ENCODE measurements at regions of chr10 and their contacts with region 1.

Region 1: DNA sequence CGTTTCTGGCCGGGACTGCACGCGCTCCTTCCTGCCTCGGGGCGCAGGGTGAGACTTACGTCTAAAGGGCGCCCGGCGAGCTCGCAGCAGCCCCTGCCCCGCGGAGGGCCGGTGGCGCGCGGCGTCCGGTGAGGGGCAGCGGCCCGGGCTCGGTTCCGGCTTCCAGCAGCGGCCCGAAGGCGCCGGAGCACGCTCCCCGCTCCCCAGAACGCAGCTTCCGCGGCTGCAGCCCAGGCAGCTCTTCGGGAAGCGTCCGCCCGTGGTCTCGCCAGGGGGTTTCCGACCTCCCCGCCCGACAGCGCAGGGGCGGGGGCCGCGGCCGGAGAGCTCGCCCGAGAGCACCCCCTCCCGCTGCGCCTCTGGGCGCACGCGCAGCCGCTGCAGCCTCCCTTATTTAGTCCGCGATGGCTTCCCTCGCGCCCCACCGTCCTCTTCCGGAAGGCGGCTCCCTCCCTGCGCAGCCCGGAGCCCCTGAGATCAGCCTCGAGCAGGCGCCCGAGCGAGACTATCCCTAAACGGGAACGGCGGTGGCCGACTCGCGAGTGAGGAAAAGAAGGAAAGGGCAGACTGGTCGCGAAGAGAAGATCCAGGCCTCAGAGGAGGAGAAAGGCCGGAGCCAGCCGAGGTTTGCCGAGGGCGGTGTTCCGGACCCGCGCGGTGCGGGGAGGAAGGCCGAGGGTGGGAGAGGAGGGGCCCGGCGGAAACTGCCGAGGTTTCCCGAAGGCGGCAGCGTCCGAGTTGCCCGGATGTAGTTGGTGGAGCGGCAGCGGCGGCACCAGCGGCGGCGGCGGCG is at the start of gene WAC:
- DNase-seq: peak; percentile 97
- ATAC-seq: peak; percentile 79
- H3K4me3 Mint-ChIP-seq: peak within 1 kb of the TSS; percentile 99
- H3K27ac Mint-ChIP-seq: peak within 1 kb of the TSS; percentile 100
- H3K4me1 Mint-ChIP-seq: peaks cover 63% of the 10 kb centered on the region
- H3K27me3 Mint-ChIP-seq: no peaks in the 10 kb centered on the region
- CTCF ChIP-seq: no peak
- total RNA-seq, gene WAC: 145 and 159 TPM in 2 replicates

Region 2: DNA sequence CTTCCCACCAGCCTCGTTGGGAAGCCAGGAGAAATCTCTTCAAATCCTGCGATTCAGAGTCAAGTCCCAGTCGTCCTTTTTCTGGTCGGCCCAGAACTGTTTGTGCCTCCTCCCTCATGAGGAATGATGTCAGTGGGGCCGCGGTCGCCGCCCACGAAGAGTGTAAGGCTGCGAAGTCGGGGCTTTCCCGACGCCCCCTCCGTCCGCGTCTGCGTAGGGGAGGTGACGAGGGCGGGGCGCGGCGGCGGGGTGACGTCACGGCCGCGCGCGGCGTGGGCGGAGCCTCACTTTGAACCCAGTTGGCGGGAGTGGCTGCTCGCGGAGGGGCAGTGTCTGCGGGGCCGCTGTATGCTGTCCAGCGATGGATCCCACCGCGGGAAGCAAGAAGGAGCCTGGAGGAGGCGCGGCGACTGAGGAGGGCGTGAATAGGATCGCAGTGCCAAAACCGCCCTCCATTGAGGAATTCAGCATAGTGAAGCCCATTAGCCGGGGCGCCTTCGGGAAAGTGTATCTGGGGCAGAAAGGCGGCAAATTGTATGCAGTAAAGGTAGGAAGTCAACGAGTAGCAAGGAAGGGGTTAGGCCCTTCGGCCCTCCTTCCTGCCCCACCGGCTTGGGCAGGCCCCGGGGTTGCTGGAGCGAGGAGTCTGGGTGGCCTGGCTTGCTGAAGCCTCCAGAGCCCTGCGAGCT is 1377.4 kb before region 1 on chr10 and contains the start of gene MASTL:
- CTCF ChIA-PET with region 1: no interaction called
- POLR2A ChIA-PET with region 1: interaction called, 15 read pairs
- intact Hi-C with region 1: no loop called
- DNase-seq: peak; percentile 97
- ATAC-seq: peak; percentile 84
- H3K4me3 Mint-ChIP-seq: peak within 1 kb of the TSS; percentile 100
- H3K27ac Mint-ChIP-seq: peak within 1 kb of the TSS; percentile 100
- H3K4me1 Mint-ChIP-seq: peaks cover 44% of the 10 kb centered on the region
- H3K27me3 Mint-ChIP-seq: no peaks in the 10 kb centered on the region
- CTCF ChIP-seq: no peak
- total RNA-seq, gene MASTL: 11.2 and 12.4 TPM in 2 replicates

Region 3: DNA sequence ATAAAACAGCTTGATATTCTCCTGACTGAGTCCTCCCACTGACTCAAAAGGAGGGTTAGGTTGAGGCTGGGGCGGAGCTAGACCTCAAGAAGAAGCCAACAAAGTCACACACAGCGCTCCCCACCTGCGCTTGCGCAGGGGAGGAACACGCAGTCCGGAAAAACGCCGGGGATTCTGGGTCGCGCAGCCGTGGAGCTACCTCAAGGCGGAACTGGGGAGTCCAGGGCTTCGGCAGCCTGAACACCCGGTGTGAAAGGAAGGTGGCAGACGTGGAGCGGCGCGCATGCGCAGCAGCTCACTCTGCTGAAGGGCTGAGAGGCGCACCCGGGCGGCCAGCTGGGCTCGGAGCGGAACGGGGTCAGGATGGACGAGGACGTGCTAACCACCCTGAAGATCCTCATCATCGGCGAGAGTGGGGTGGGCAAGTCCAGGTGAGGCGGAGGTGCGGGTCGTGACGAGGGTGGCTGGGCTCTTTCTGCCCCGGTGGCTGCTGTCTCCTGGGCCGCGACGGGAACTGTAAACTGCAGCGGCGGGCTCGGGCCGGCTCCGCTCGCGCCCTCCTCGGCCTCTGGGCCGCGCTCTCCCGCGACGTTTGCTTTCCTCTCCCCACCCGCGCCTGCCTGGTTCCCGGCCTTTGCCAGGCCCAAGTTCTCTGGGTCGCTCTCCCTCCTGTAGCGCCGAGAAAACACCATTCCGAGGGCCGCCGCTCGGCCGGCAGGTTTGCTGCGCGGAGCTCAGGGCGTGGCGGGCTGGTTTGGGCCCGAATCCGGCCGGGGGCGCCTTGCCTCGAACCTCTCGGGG is 1028.4 kb before region 1 on chr10 and contains the start of gene RAB18:
- CTCF ChIA-PET with region 1: interaction called, 3 read pairs
- POLR2A ChIA-PET with region 1: interaction called, 10 read pairs
- intact Hi-C with region 1: loop called (anchors 1 kb)
- DNase-seq: peak; percentile 93
- ATAC-seq: peak; percentile 96
- H3K4me3 Mint-ChIP-seq: peak within 1 kb of the TSS; percentile 100
- H3K27ac Mint-ChIP-seq: peak within 1 kb of the TSS; percentile 99
- H3K4me1 Mint-ChIP-seq: peaks cover 41% of the 10 kb centered on the region
- H3K27me3 Mint-ChIP-seq: no peaks in the 10 kb centered on the region
- CTCF ChIP-seq: no peak
- total RNA-seq, gene RAB18: 48.3 and 55.6 TPM in 2 replicates

Region 4: GRCh38 chr10:28432210-28432676 is 100.3 kb before region 1 on chr10:
- CTCF ChIA-PET with region 1: no interaction called
- POLR2A ChIA-PET with region 1: interaction called, 4 read pairs
- intact Hi-C with region 1: loop called (anchors 1 kb)
- DNase-seq: no peak
- ATAC-seq: peak; percentile 58
- H3K4me3 Mint-ChIP-seq: peak overlapping the region; percentile 66
- H3K27ac Mint-ChIP-seq: no peak overlapping the region
- H3K4me1 Mint-ChIP-seq: peaks cover 6% of the 10 kb centered on the region
- H3K27me3 Mint-ChIP-seq: no peaks in the 10 kb centered on the region
- CTCF ChIP-seq: peak; percentile 75

Region 5: GRCh38 chr10:28554952-28555351 is 22.4 kb after region 1 on chr10:
- CTCF ChIA-PET with region 1: no interaction called
- POLR2A ChIA-PET with region 1: interaction called, 3 read pairs
- intact Hi-C with region 1: loop called (anchors 2 kb)
- DNase-seq: no peak
- ATAC-seq: no peak
- H3K4me3 Mint-ChIP-seq: no peak overlapping the region
- H3K27ac Mint-ChIP-seq: no peak overlapping the region
- H3K4me1 Mint-ChIP-seq: peaks cover 89% of the 10 kb centered on the region
- H3K27me3 Mint-ChIP-seq: no peaks in the 10 kb centered on the region
- CTCF ChIP-seq: no peak

Region 6: DNA sequence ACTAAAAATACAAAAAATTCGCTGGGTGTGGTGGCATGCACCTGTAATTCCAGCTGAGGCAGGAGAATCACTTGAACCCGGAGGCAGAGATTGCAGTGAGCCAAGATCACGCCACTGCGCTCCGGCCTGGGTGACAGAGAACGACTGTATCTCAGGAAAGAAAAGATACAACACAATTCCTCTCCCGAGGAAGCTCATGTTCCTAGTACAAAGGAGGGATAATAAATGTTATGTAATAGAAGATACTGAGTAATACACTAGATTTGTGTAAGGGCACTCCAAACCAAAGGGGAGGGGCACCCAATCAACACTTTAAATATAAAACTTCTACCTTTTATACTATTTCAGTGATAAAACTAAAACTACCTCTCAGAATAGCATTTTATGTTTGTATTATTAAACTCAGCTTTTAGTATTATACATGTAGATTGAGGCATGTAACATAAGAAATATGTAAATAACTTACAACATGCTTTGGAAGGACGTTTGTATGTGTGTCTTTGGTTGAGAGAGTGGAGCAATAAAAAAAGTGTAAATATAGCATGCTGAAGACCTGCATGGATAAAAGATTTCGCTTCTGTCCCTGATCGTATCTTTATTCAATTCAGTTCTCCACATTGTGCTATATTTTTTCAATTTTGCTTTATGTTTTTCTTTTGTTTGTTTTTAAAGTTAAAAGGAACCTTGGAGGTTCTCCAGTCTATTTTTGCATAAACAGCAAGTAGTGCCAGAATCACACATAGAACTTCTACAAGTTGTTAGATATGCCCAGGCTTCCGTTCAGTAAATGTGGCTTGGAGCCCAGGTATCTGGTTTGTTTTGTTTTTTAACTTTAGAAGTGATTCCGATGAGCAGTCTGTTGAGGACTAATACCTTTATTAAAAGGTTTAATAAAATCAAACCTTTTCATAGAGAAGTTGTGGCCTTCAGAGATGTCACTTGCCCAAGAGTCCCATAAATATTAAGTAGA is 72.3 kb after region 1 on chr10:
- CTCF ChIA-PET with region 1: no interaction called
- POLR2A ChIA-PET with region 1: interaction called, 13 read pairs
- intact Hi-C with region 1: no loop called
- DNase-seq: no peak
- ATAC-seq: no peak
- H3K4me3 Mint-ChIP-seq: no peak overlapping the region
- H3K27ac Mint-ChIP-seq: no peak overlapping the region
- H3K4me1 Mint-ChIP-seq: peaks cover 22% of the 10 kb centered on the region
- H3K27me3 Mint-ChIP-seq: no peaks in the 10 kb centered on the region
- CTCF ChIP-seq: no peak